ENCODE measurements at regions of chr14 and their contacts with region 1.

Region 1: DNA sequence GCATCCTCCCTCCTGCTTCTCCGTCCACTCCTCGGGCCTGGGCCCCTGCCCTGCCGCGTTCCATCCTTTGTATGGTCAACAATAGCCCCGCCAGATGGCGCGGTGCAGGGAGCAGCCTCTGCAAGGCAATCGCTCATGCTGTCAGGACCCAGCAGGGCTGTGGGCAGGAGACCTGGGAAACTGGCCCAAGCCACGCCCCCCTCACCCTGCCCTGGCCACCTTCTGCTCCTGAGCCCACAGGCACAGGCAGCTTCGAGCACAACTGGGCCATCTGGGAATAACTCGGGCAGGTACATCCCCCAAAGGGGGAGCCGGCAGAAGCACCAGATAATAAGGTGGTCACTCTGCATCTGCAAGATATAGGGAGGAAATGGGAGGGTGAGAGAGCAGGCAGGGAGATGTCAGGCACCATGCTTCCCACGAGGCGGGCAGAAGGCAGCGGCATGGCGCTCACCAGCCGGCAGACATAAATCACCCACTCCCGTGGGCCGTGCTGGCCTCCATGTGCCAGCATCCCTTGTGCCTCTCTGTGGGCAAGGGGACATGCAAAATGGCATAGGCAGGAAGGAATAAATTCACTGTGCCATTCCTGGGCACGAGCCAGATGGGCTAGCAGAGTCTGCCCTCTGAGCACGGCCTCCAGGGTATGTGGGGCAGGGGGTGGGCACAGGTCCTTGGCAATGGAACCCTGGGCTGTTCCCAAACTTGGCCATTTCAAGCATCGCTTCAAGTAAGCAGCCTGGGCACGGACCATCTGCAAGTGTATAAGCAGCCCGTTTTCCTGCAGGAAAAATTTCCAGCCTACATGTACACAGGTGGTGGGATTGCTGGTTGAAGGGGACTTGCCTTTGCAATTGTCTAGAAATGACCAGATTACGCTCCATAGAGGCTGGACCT is 40.5 kb downstream of the CCDC85C start:
- DNase-seq: peak; percentile 86
- ATAC-seq: peak; percentile 80

Region 2: GRCh38 chr14:99604283-99604765 is 40.8 kb after region 1 on chr14:
- intact Hi-C with region 1: loop called (anchors 5 kb)
- DNase-seq: peak; percentile 95
- ATAC-seq: peak; percentile 95

Measured in Right ventricle myocardium superior (tissue), 1 donor.